ENCODE measurements at regions of chrX and their contacts with region 1.

Region 1: DNA sequence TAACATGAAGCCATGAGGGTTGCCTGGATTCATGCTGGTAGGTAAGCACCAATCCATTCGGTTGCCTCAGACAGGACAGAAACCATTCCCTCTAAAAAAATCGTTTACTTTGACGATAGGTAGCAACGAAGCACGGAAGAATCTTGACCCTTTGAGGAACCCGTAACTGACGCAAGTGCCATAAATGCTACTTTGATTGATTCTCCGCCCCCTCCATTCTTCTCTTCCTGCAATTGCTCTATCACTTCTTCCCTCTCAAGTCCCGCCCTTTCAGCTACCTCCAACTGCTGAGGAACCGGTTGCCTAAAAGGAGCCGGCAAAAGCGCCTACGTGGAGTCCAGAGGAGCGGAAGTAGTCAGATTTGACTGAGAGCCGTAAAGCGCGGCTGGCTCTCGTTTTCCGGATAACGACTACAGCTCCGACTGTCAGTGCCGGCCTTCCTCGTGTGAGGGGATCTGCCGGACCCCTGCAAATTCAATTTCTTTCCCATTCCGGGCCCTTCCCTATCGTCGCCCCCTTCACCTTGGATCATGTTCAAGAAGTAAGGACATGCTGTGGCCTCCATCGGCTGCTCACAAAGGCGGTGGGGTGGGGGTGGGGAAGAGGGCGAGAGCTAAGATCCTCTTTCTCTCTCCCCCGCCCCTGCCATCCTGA is at the start of gene MCTS1:
- DNase-seq: peak; percentile 41 to 57
- H3K4me3 ChIP-seq: peak within 1 kb of the TSS; percentile 74 to 91 (median 82)
- H3K27ac ChIP-seq: peak within 1 kb of the TSS; percentile 77
- H3K4me1 ChIP-seq: no peaks in the 10 kb centered on the region
- H3K27me3 ChIP-seq: no peaks in the 10 kb centered on the region
- CTCF ChIP-seq: no peak
- EP300 ChIP-seq: no peak
- POLR2A ChIP-seq: peak in 1 of 2 experiments; percentile 48; a peak in 1 of 3 replicates
- RAD21 ChIP-seq: no peak
- total RNA-seq, gene MCTS1: 31.6 and 33.0 TPM in 2 replicates

Region 2: DNA sequence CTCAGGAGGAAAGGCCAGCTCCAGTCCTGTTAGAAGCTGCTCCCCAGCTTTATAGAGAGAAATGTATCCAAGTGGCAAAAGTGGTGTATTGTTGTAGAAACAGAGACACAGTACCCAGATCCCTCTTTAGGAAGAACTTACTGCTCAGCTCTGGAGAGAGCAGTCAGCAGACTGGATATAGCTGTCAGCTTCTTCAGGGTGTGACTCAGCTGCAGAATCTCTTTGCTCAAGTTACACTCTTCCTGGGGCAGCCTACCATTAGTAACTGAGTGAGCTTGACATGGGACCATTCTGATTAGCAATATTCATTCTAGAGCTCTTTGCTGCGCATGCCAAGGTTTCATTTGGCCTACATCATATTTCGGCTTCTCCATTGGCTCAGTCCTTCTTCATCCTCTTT is 201.5 kb before region 1 on chrX:
- CTCF ChIA-PET with region 1: no interaction called
- POLR2A ChIA-PET with region 1: no interaction called
- DNase-seq: no peak
- H3K4me3 ChIP-seq: no peak overlapping the region
- H3K27ac ChIP-seq: no peak overlapping the region
- H3K4me1 ChIP-seq: no peaks in the 10 kb centered on the region
- H3K27me3 ChIP-seq: no peaks in the 10 kb centered on the region
- CTCF ChIP-seq: no peak
- EP300 ChIP-seq: no peak
- POLR2A ChIP-seq: no peak
- RAD21 ChIP-seq: no peak

Region 3: DNA sequence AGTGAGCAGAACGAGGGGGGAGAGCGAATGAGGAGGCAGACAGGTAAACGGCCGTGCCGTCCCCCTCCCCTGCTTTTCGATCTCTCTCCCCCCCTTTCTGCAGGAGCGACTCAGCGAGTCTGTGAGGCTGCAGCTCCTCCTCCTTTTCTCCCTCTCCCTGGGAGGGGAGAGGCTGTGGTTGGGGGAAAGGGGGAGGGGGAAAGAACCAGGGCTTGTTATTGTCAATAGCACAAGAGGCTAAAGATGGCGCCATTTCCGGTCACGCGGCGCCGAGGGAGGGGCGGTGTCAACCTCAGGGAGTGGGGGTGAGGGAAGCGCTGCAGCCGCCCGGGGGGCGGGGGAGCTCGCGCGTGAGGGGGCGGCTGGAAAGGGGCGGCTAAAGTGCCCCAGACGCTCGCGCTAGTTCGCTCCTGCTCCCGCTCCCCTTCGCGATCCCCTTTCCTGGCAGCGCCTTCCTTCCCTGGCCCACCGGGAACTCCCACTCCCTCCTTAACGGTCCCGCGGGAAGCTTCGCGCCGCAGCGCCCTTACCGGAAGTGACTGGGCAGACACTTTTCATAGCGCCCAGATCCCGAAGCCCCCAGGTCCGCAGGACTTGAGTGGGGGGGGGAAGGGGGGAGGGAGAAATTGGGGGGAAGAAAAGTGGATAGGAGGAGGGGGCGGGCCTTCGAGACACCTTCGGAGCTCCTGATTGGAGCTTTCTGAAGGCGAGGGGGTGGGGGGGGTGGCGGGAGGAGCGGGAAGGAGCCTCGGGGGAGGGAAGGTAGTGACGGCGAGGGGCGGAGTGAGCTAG is 42.8 kb before region 1 on chrX and contains the start of gene CUL4B:
- CTCF ChIA-PET with region 1: no interaction called
- POLR2A ChIA-PET with region 1: interaction called, 10 read pairs
- DNase-seq: peak; percentile 78 to 88
- H3K4me3 ChIP-seq: peak within 1 kb of the TSS; percentile 71 to 95 (median 79)
- H3K27ac ChIP-seq: peak within 1 kb of the TSS; percentile 86
- H3K4me1 ChIP-seq: no peaks in the 10 kb centered on the region; a peak in 2 of 7 replicates
- H3K27me3 ChIP-seq: no peaks in the 10 kb centered on the region
- CTCF ChIP-seq: no peak
- EP300 ChIP-seq: no peak
- POLR2A ChIP-seq: peak; percentile 48 to 84
- RAD21 ChIP-seq: no peak
- total RNA-seq, gene CUL4B: 44.0 and 46.1 TPM in 2 replicates

Measured in H1 (cell line).